GM10248 (cell line): ENCODE measurements at regions of chr2 and their contacts with region 1.

Region 1: GRCh38 chr2:231612179-231613053 is 19.8 kb downstream of the TEX44 start:
- DNase-seq: peak; percentile 89
- CTCF ChIP-seq: peak; percentile 85

Region 2: DNA sequence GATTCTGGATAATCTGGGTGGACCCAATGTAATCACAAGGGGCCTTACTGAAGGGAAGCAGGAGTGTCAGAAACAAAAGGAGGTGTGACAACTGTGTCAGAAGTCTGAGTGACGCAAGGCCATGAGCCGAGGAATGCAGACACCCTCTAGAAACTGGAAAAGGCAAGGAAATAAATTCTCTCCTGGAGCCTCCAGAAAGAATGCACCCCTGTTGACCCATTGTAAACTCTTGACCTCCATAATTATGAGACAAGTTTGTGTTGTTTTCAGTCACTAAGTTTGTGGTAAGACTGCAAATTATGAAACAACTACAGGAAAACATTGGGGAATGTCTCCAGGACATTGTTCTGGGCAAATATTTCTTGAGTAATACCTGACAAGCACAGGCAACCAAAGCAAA is 264.2 kb before region 1 on chr2:
- CTCF ChIA-PET with region 1: no interaction called
- POLR2A ChIA-PET with region 1: no interaction called
- DNase-seq: no peak
- CTCF ChIP-seq: no peak

Region 3: GRCh38 chr2:231701456-231702373 is 89.3 kb after region 1 on chr2:
- CTCF ChIA-PET with region 1: interaction called, 41 read pairs
- POLR2A ChIA-PET with region 1: interaction called, 33 read pairs
- DNase-seq: no peak
- CTCF ChIP-seq: no peak

Region 4: GRCh38 chr2:231706731-231707624 is 94.6 kb after region 1 on chr2:
- CTCF ChIA-PET with region 1: interaction called, 210 read pairs
- POLR2A ChIA-PET with region 1: interaction called, 33 read pairs
- DNase-seq: peak; percentile 94
- CTCF ChIP-seq: peak; percentile 90

Region 5: GRCh38 chr2:231720987-231721966 is 108.9 kb after region 1 on chr2:
- CTCF ChIA-PET with region 1: interaction called, 210 read pairs
- POLR2A ChIA-PET with region 1: interaction called, 31 read pairs
- DNase-seq: peak; percentile 74
- CTCF ChIP-seq: peak; percentile 1